Activated CD4-positive, alpha-beta memory T cell treated with anti-CD3 and anti-CD28 coated beads for 36 hours (primary cell): ENCODE measurements at regions of chr2 and their contacts with region 1.

Region 1: DNA sequence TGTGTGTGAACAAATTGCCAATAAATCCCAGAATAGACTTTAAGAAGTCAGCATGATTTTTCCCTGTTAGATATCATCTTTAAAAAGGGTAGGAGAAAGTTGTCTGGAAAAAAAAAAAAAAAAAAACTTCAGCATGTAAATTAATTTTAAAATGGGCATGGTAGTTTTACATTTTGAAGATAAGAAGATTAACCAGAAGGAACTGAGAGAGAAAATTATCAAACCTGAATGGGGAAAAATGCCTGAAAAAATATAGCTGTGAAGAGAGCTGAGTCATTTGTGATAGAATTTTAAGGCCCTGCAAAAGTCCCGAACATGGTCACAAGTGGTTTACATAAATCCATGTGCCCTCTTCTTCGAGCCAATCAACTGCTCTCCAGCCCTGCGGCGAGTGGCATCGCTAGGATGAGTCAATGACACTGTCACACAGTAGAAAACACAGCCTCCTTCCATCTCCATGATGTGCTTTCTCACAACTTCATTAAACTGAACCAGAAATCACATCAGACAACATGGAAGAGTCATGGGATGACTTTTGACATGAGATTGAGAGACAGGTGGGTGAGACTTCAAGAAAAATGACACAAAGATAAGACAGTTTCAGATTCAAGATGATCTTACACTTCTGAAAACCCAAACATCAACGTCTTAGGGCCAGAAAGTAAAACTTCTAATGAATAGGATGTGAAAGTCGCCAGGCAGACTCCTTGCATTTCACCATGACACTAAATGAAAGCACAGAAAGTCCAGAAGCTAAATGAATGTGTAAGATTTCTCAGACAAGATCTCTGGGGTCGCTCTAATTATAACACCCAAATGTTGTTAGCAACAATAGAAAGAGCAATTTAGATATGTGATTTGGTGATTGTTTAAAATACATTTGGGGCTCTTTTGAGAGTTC is 273.0 kb upstream of the ID2 start:
- DNase-seq: peak; percentile 91
- H3K4me3 Mint-ChIP-seq: peak overlapping the region; percentile 0
- H3K27ac Mint-ChIP-seq: peak overlapping the region; percentile 79
- H3K4me1 Mint-ChIP-seq: peaks cover 34% of the 10 kb centered on the region
- H3K27me3 Mint-ChIP-seq: no peaks in the 10 kb centered on the region

Region 2: GRCh38 chr2:7773362-7774360 is 635.1 kb before region 1 on chr2:
- CTCF ChIA-PET with region 1: no interaction called
- POLR2A ChIA-PET with region 1: no interaction called
- intact Hi-C with region 1: loop called (anchors 5 kb)
- DNase-seq: peak; percentile 65
- H3K4me3 Mint-ChIP-seq: no peak overlapping the region
- H3K27ac Mint-ChIP-seq: peak overlapping the region; percentile 66
- H3K4me1 Mint-ChIP-seq: peaks cover 33% of the 10 kb centered on the region
- H3K27me3 Mint-ChIP-seq: peaks cover 12% of the 10 kb centered on the region

Region 3: GRCh38 chr2:8303322-8303832 is 105.4 kb before region 1 on chr2:
- CTCF ChIA-PET with region 1: no interaction called
- POLR2A ChIA-PET with region 1: no interaction called
- intact Hi-C with region 1: loop called (anchors 2 kb)
- DNase-seq: peak; percentile 81
- H3K4me3 Mint-ChIP-seq: no peak overlapping the region
- H3K27ac Mint-ChIP-seq: peak overlapping the region; percentile 16
- H3K4me1 Mint-ChIP-seq: peaks cover 62% of the 10 kb centered on the region
- H3K27me3 Mint-ChIP-seq: peaks cover 6% of the 10 kb centered on the region

Region 4: GRCh38 chr2:8378016-8378810 is 30.6 kb before region 1 on chr2:
- CTCF ChIA-PET with region 1: no interaction called
- POLR2A ChIA-PET with region 1: interaction called, 7 read pairs
- intact Hi-C with region 1: loop called (anchors 1 kb)
- DNase-seq: peak; percentile 49
- H3K4me3 Mint-ChIP-seq: no peak overlapping the region
- H3K27ac Mint-ChIP-seq: peak overlapping the region; percentile 56
- H3K4me1 Mint-ChIP-seq: peaks cover 38% of the 10 kb centered on the region
- H3K27me3 Mint-ChIP-seq: no peaks in the 10 kb centered on the region

Region 5: GRCh38 chr2:8477552-8478470 is 69.0 kb after region 1 on chr2:
- CTCF ChIA-PET with region 1: no interaction called
- POLR2A ChIA-PET with region 1: interaction called, 5 read pairs
- intact Hi-C with region 1: loop called (anchors 1 kb)
- DNase-seq: peak; percentile 51
- H3K4me3 Mint-ChIP-seq: peak overlapping the region; percentile 60
- H3K27ac Mint-ChIP-seq: peak overlapping the region; percentile 90
- H3K4me1 Mint-ChIP-seq: peaks cover 91% of the 10 kb centered on the region
- H3K27me3 Mint-ChIP-seq: no peaks in the 10 kb centered on the region

Region 6: GRCh38 chr2:8525582-8526402 is 117.0 kb after region 1 on chr2:
- CTCF ChIA-PET with region 1: no interaction called
- POLR2A ChIA-PET with region 1: interaction called, 10 read pairs
- intact Hi-C with region 1: no loop called
- DNase-seq: no peak
- H3K4me3 Mint-ChIP-seq: no peak overlapping the region
- H3K27ac Mint-ChIP-seq: no peak overlapping the region
- H3K4me1 Mint-ChIP-seq: peaks cover 30% of the 10 kb centered on the region
- H3K27me3 Mint-ChIP-seq: no peaks in the 10 kb centered on the region